ENCODE measurements at regions of chr16 and their contacts with region 1.

Region 1: DNA sequence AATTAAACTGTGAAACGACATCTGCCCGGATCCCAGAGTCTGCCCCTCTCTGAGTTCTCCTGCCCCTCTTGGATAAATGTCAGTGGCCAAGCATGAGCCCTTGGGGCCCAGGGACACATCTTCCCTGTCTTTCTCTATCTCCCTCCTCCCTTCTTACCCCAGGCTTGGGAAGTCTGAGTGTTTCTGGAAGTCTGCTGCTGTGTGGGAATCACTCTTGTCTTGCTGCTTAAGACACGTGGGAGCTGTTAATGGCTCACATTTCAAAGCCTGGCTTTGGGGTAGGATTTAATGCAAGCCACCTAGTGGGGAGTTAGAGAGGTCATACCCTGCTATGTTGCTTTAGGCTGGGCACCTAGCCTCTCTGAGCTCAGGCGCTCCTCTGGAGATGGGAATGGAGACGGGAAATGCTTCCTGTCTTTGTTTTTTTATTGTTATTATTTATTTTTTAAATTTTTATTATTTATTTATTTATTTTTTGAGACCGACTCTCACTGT is 218.5 kb upstream of the CIBAR2 start:
- DNase-seq: peak in 5 of 10 donors; percentile 26 to 47 (median 33)
- ATAC-seq: peak; percentile 48 to 56
- H3K4me3 Mint-ChIP-seq: peak overlapping the region in 5 of 10 donors; percentile 15 to 55 (median 21)
- H3K27ac Mint-ChIP-seq: peak overlapping the region in 5 of 10 donors; percentile 21 to 68 (median 53)
- H3K4me1 Mint-ChIP-seq: peaks cover 12 to 28% (median 28%) of the 10 kb centered on the region in 4 donors
- H3K27me3 Mint-ChIP-seq: peaks cover 0 to 14% (median 2%) of the 10 kb centered on the region in 5 donors

Region 2: GRCh38 chr16:85286970-85287824 is 43.5 kb before region 1 on chr16:
- POLR2A ChIA-PET with region 1: no interaction called
- DNase-seq: no peak
- ATAC-seq: no peak
- H3K4me3 Mint-ChIP-seq: no peak overlapping the region
- H3K27ac Mint-ChIP-seq: no peak overlapping the region
- H3K4me1 Mint-ChIP-seq: no peaks in the 10 kb centered on the region
- H3K27me3 Mint-ChIP-seq: no peaks in the 10 kb centered on the region

Region 3: DNA sequence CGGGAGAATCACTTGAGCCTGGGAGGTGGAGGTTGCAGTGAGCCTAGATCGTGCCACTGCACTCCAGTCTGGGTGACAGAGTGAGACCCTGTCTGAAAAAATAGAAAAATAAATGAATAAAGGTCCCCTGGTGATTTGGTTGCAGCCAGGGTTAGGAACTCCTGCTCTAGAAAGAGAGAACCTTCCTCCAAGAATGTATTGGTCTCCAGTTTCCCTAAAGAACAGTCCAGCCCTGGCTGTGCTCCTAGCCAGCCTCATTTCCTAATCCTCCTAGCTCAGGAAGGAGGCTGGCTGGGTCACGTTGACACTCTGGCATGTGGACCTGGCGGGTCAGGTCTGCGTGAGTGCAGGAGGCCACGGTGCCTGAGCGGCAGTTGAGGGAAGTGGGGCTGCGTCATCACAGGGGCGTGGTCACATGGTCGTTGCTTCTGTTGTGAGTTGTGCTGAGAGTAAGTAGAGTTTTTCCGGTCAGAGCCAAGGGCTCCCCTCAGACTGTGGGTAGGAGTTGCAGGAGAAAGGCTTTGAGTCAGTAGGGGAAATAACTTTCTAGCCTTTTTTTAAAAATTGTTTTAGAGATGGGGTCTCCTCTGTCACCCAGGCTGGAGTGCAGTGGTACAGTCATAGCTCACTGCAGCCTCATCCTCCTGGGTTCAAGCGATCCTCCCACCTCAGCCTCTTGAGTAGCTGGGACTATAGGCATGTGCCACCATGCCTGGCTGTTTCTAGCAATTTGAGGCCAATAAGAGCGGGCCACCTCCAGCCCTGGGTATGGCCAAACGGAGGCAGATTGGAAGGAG is 24.5 kb before region 1 on chr16:
- POLR2A ChIA-PET with region 1: interaction called, 38 read pairs
- DNase-seq: peak; percentile 62 to 90 (median 82)
- ATAC-seq: peak; percentile 83 to 88
- H3K4me3 Mint-ChIP-seq: peak overlapping the region; percentile 0 to 74 (median 62)
- H3K27ac Mint-ChIP-seq: peak overlapping the region; percentile 84 to 96 (median 93)
- H3K4me1 Mint-ChIP-seq: peaks cover 30 to 68% (median 66%) of the 10 kb centered on the region in 4 donors
- H3K27me3 Mint-ChIP-seq: no peaks in the 10 kb centered on the region

Region 4: DNA sequence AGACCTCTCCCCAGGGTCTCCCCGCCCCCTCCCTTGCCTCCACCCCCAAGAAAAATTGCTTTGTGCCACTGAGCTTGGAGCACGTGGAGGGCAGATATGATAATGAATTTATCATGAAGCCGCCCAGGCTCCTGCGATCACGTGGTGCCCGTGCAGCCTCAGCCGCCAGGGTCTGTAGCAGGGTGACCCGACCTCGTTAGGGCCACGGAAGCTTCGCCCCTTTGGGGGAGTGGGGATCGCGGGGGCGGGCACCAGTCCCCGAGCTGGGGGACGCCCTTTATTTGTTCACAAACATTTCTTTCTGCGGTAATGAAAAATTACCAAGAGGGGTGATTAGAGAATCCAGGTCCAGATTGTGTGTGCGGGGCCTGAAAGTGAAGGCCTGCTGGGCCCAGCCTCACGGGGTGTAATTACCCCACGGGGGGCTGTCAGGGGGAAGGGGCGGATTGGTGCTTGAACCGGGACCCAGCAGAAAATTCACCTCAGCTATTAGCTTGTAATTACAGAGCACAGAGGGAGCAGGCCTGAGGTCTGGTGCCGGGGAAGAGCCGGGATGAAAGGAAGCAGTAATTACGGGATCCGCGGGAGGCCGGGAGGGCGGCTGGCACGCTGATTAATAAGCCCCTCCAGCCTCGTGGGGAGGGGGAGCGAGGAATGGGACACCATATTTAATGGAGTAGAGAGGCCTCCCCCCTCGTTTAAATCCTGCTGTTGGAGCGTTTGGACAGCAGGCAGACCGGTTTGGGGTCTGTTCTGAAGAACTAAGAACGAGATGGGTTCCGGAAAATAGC is 295.6 kb after region 1 on chr16:
- POLR2A ChIA-PET with region 1: no interaction called
- DNase-seq: no peak
- ATAC-seq: no peak
- H3K4me3 Mint-ChIP-seq: peak overlapping the region in 7 of 10 donors; percentile 35 to 78 (median 50)
- H3K27ac Mint-ChIP-seq: peak overlapping the region in 7 of 10 donors; percentile 39 to 90 (median 62)
- H3K4me1 Mint-ChIP-seq: peaks cover 34 to 87% (median 69%) of the 10 kb centered on the region in 4 donors
- H3K27me3 Mint-ChIP-seq: no peaks in the 10 kb centered on the region